ENCODE measurements at regions of chr3 and their contacts with region 1.

Region 1: GRCh38 chr3:9946112-9947024 is 5.8 kb downstream of the PRRT3 start:
- DNase-seq: peak; percentile 86
- ATAC-seq: peak; percentile 75
- H3K4me3 Mint-ChIP-seq: peak overlapping the region; percentile 78
- H3K27ac Mint-ChIP-seq: no peak overlapping the region; the same call in 1 of the 2 replicates
- H3K4me1 Mint-ChIP-seq: peaks cover 3% of the 10 kb centered on the region
- H3K27me3 Mint-ChIP-seq: no peaks in the 10 kb centered on the region; the same call in 1 of the 2 replicates
- CTCF ChIP-seq: no peak

Region 2: GRCh38 chr3:9826815-9827567 is 119.4 kb before region 1 on chr3:
- CTCF ChIA-PET with region 1: interaction called, 22 read pairs
- POLR2A ChIA-PET with region 1: interaction called, 8 read pairs
- DNase-seq: peak; percentile 45
- ATAC-seq: peak; percentile 92
- H3K4me3 Mint-ChIP-seq: no peak overlapping the region
- H3K27ac Mint-ChIP-seq: no peak overlapping the region
- H3K4me1 Mint-ChIP-seq: peaks cover 8% of the 10 kb centered on the region
- H3K27me3 Mint-ChIP-seq: no peaks in the 10 kb centered on the region
- CTCF ChIP-seq: peak; percentile 69

Region 3: DNA sequence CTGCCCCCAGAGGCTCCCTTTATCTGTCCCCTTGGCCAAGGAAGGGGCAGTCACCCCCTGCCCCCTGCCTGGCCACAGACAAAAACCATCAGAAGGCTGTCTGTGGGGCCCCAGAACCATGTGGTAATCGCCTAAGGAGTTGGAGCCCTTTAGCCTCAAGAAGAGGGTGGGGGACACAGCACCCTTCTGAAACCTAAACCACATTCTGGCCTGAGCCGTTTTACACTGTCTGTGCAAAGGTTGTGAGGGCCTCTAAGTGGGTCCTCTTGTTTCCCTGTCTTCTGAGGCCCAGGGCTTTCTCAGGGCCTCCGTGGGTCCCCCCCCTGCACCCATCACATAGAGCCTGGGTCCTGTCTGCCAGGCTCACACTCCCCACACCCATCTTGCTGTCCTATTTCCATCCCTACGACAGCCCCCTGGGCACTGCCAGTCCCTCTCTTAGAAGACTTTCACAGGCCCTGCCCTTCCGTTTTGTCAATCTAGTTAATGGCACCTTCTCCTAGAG is 84.7 kb before region 1 on chr3:
- CTCF ChIA-PET with region 1: interaction called, 10 read pairs
- POLR2A ChIA-PET with region 1: no interaction called
- DNase-seq: no peak
- ATAC-seq: no peak
- H3K4me3 Mint-ChIP-seq: peak overlapping the region; percentile 66; the same call in 1 of the 2 replicates
- H3K27ac Mint-ChIP-seq: no peak overlapping the region
- H3K4me1 Mint-ChIP-seq: peaks cover 25% of the 10 kb centered on the region
- H3K27me3 Mint-ChIP-seq: peaks cover 12% of the 10 kb centered on the region
- CTCF ChIP-seq: no peak

Region 4: GRCh38 chr3:9915254-9916141 is 30.9 kb before region 1 on chr3:
- CTCF ChIA-PET with region 1: interaction called, 14 read pairs
- POLR2A ChIA-PET with region 1: interaction called, 5 read pairs
- DNase-seq: peak; percentile 68
- ATAC-seq: peak; percentile 20
- H3K4me3 Mint-ChIP-seq: peak overlapping the region; percentile 73
- H3K27ac Mint-ChIP-seq: no peak overlapping the region
- H3K4me1 Mint-ChIP-seq: peaks cover 18% of the 10 kb centered on the region
- H3K27me3 Mint-ChIP-seq: peaks cover 3% of the 10 kb centered on the region; the same call in 1 of the 2 replicates
- CTCF ChIP-seq: no peak

Region 5: DNA sequence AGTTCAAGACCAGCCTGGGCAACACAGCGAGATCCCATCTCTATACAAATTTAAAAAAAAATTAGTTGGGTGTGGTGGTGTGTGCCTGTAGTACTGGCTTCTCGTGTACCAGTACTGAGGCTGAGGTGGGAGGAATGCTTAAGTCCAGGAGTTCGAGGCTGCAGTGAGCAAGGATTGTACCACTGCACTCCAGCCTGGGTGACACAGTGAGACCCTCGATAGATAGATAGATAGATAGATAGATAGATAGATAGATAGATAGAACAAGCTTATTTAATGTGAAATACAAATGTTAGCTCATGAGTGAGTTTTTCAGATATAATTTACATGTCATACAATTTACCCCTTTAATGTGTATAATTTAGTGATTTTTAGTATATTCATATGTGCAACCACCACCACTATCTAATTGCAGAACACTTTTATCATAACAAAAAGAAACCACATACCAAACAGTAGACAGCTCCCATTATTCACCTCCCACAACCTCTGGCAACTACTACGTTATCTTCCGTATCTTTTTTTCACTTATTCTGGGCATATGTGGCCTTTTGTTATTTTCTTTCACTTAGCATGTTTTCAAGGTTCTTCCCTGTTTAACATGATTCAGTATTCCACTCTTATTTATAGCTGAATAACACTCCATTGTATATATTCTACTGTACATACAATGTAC is 19.0 kb after region 1 on chr3:
- CTCF ChIA-PET with region 1: interaction called, 12 read pairs
- POLR2A ChIA-PET with region 1: no interaction called
- DNase-seq: no peak
- ATAC-seq: no peak
- H3K4me3 Mint-ChIP-seq: no peak overlapping the region
- H3K27ac Mint-ChIP-seq: no peak overlapping the region
- H3K4me1 Mint-ChIP-seq: no peaks in the 10 kb centered on the region
- H3K27me3 Mint-ChIP-seq: no peaks in the 10 kb centered on the region
- CTCF ChIP-seq: no peak

Region 6: GRCh38 chr3:9986237-9986725 is 39.9 kb after region 1 on chr3:
- CTCF ChIA-PET with region 1: interaction called, 14 read pairs
- POLR2A ChIA-PET with region 1: interaction called, 12 read pairs
- DNase-seq: no peak
- ATAC-seq: peak; percentile 43
- H3K4me3 Mint-ChIP-seq: peak overlapping the region; percentile 97
- H3K27ac Mint-ChIP-seq: peak overlapping the region; percentile 93
- H3K4me1 Mint-ChIP-seq: peaks cover 14% of the 10 kb centered on the region
- H3K27me3 Mint-ChIP-seq: no peaks in the 10 kb centered on the region
- CTCF ChIP-seq: no peak

Region 7: GRCh38 chr3:10000686-10001085 is 54.3 kb after region 1 on chr3:
- CTCF ChIA-PET with region 1: no interaction called
- POLR2A ChIA-PET with region 1: no interaction called
- DNase-seq: no peak
- ATAC-seq: no peak
- H3K4me3 Mint-ChIP-seq: no peak overlapping the region
- H3K27ac Mint-ChIP-seq: peak overlapping the region; percentile 58; the same call in 1 of the 2 replicates
- H3K4me1 Mint-ChIP-seq: no peaks in the 10 kb centered on the region
- H3K27me3 Mint-ChIP-seq: peaks cover 2% of the 10 kb centered on the region
- CTCF ChIP-seq: no peak

Measured in WTC11 (cell line).